ENCODE measurements at regions of chr1 and their contacts with region 1.

Region 1: GRCh38 chr1:93304716-93305138 is 41.0 kb upstream of the DR1 start:
- DNase-seq: peak; percentile 23
- H3K4me3 ChIP-seq: no peak overlapping the region
- CTCF ChIP-seq: peak; percentile 56

Region 2: GRCh38 chr1:93051961-93052360 is 252.8 kb before region 1 on chr1:
- CTCF ChIA-PET with region 1: no interaction called
- POLR2A ChIA-PET with region 1: no interaction called
- DNase-seq: no peak
- H3K4me3 ChIP-seq: no peak overlapping the region
- CTCF ChIP-seq: no peak

Region 3: DNA sequence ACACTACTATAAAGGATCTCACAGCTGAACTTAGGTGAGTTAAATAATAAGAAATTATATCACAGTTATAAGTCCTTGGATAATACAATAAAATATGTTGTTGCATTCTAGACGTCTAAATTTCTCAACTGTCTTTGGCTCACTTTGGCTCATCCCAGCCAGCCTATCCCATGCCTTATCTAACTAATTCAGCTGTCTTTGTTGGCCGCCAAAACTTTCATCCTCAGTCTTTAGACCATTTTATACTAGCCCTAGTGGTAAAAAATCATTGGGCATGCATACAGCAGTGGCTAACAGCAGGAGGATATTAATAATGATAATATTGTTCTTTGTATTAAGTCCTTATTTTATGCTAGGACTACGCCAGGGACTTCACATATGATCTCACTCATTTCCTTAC is 64.9 kb before region 1 on chr1:
- CTCF ChIA-PET with region 1: no interaction called
- POLR2A ChIA-PET with region 1: no interaction called
- DNase-seq: no peak
- H3K4me3 ChIP-seq: no peak overlapping the region
- CTCF ChIP-seq: no peak

Region 4: GRCh38 chr1:93288558-93288957 is 16.2 kb before region 1 on chr1:
- CTCF ChIA-PET with region 1: interaction called, 37 read pairs
- POLR2A ChIA-PET with region 1: no interaction called
- DNase-seq: no peak
- H3K4me3 ChIP-seq: no peak overlapping the region
- CTCF ChIP-seq: no peak

Region 5: GRCh38 chr1:93338421-93338820 is 33.7 kb after region 1 on chr1:
- CTCF ChIA-PET with region 1: interaction called, 21 read pairs
- POLR2A ChIA-PET with region 1: no interaction called
- DNase-seq: peak; percentile 81
- H3K4me3 ChIP-seq: no peak overlapping the region
- CTCF ChIP-seq: no peak

Region 6: GRCh38 chr1:93358293-93358692 is 53.6 kb after region 1 on chr1:
- CTCF ChIA-PET with region 1: interaction called, 20 read pairs
- POLR2A ChIA-PET with region 1: no interaction called
- DNase-seq: no peak
- H3K4me3 ChIP-seq: no peak overlapping the region
- CTCF ChIP-seq: no peak

Region 7: GRCh38 chr1:93408203-93408602 is 103.5 kb after region 1 on chr1:
- CTCF ChIA-PET with region 1: no interaction called
- POLR2A ChIA-PET with region 1: no interaction called
- DNase-seq: no peak
- H3K4me3 ChIP-seq: no peak overlapping the region
- CTCF ChIP-seq: no peak

Region 8: DNA sequence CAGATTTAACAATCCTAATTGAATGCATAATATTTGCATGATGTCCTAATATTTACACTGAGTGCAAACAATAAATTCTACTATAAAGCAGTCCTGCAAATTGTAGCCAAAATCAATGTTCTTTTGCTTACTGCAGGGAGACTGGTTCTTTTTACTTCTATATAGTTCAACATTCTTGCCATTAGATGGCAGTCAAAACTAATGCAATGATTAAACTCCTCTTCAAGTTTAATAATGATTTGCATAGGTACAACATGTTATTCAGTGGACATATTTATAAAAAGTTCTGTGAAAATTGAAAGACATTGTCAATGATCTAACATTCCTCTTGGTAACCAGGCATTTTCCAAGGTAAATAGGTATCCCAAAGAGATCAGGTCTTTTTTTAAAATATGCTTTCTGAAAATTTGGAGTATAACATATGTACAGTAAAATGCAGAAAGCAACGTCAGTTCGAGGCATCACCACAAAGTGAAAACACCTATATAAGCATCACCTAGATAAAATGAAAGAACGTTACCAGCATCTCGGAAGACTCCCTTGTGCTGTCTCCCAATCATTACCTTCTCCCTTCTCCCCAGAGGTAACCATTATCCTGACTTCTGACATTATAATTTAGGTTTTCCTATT is 133.4 kb after region 1 on chr1:
- CTCF ChIA-PET with region 1: interaction called, 54 read pairs
- POLR2A ChIA-PET with region 1: no interaction called
- DNase-seq: no peak
- H3K4me3 ChIP-seq: no peak overlapping the region
- CTCF ChIP-seq: peak; percentile 32

Region 9: DNA sequence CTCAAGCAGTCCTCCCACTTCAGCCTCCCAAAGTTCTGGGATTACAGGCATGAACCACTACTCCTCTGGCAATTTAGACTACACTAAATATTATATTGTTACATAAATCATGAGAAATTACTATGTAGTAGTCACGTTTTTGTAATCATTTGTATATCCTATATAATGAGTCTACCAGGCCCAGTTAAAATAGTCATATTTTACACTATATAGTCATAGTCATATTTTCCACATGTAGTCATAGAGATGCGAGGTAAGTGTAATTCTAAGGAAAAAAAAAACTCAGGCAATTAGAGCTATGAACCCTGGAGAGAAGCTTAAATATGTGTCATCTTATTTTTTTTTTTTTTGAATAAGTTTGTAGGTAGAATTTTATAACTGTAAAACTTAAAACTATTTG is 233.2 kb after region 1 on chr1:
- CTCF ChIA-PET with region 1: no interaction called
- POLR2A ChIA-PET with region 1: no interaction called
- DNase-seq: no peak
- H3K4me3 ChIP-seq: no peak overlapping the region
- CTCF ChIP-seq: no peak

Measured in AG04449 (cell line).